ENCODE measurements at regions of chr1 and their contacts with region 1.

Region 1: GRCh38 chr1:55284852-55285251 is 69.7 kb upstream of the USP24 start:
- DNase-seq: peak; percentile 27
- H3K4me3 ChIP-seq: no peak overlapping the region
- H3K27ac ChIP-seq: no peak overlapping the region
- H3K27me3 ChIP-seq: no peaks in the 10 kb centered on the region
- CTCF ChIP-seq: peak; percentile 76

Region 2: DNA sequence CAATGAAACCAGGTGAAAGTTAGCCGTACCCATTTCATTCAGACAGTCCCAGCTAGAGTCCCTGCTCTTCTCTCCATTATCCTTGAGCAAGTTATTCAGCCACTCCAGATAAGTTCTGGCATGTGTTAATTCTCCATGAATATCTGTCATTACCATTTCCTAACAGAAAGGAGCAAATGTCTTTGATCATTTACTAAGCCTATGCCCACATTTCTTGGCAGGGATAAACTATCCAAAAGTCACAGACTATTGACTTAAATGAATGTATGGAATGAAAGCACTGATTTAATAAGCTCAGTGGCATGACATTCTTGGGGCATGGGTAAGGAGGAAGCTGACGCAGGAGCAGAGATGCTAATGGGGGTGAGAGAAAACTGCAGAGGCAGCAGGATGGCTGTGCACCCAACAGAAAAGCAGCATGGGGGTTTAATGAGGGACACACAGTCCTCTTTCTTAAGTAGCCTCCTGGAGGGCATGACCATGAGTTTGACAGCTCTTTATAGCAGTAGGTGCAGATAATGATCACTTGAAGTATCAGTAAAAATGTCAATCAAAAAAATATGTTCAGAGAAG is 380.3 kb before region 1 on chr1:
- CTCF ChIA-PET with region 1: no interaction called
- POLR2A ChIA-PET with region 1: no interaction called
- DNase-seq: peak; percentile 41
- H3K4me3 ChIP-seq: no peak overlapping the region
- H3K27ac ChIP-seq: no peak overlapping the region
- H3K27me3 ChIP-seq: no peaks in the 10 kb centered on the region
- CTCF ChIP-seq: no peak

Region 3: GRCh38 chr1:55089683-55090082 is 195.2 kb before region 1 on chr1:
- CTCF ChIA-PET with region 1: no interaction called
- POLR2A ChIA-PET with region 1: no interaction called
- DNase-seq: no peak
- H3K4me3 ChIP-seq: no peak overlapping the region
- H3K27ac ChIP-seq: no peak overlapping the region
- H3K27me3 ChIP-seq: no peaks in the 10 kb centered on the region
- CTCF ChIP-seq: no peak

Region 4: DNA sequence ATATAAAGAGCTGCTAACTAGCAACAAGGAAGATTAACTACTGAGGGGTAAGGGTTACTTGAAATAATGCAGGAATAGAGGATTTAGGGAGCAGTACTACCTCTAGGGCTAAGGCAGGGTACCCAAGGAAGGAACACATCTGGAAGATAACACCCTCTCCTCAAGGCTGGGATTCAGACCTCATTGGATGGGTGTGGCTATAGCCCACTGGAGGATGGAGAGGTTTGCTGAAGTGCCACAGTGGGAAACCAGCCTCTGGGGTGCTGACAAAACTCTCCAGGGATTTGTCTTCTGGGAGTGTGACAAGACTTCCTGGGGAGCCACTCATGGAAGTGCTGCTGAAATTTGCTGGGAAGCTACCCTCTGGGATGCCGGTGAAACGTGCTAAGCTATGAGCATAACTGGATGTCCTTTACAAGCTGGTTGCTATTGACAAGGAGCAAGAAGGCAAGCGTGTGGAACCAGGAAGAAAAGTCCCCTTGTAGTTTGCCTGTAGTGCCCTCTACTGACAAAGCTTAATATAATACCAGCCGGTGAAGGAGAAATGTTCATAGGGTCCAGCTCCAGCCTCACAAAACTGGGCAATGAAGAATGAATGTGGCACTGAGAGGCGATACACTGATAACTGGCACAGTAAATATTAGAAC is 53.1 kb after region 1 on chr1:
- CTCF ChIA-PET with region 1: interaction called, 31 read pairs
- POLR2A ChIA-PET with region 1: no interaction called
- DNase-seq: no peak
- H3K4me3 ChIP-seq: no peak overlapping the region
- H3K27ac ChIP-seq: no peak overlapping the region
- H3K27me3 ChIP-seq: no peaks in the 10 kb centered on the region
- CTCF ChIP-seq: peak; percentile 67

Region 5: DNA sequence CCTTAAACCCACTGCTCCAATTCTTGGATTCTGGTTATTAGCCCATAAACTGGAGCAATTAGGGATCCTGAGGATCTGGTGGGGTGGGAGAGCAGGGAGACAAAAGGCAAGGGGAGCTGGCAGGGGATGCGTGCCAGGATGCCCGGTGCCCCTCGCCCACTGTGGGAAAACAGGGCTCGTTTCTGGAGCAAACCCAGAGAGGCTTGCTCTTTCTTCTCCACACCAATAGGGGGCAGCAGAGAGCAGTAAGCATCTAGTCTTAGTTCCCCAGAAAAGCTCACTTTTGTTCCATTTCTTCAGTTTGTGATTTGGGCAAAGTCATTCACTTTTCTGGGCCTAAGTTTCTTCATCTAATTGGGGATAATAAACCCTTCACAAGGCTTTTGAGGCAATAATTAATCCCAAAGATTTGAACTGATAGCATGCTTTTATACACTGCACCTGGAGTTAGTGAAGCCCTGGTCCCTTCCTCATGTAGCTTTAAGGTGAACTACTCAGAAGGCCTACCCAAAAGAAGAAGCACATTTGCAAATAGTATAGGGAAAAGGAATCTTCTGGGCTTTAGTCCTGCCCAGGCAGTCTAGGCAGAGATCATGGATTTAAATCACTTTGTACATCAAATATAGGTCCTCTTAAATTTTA is 90.9 kb after region 1 on chr1:
- CTCF ChIA-PET with region 1: interaction called, 27 read pairs
- POLR2A ChIA-PET with region 1: no interaction called
- DNase-seq: peak; percentile 13
- H3K4me3 ChIP-seq: no peak overlapping the region
- H3K27ac ChIP-seq: no peak overlapping the region
- H3K27me3 ChIP-seq: no peaks in the 10 kb centered on the region
- CTCF ChIP-seq: peak; percentile 91

Region 6: DNA sequence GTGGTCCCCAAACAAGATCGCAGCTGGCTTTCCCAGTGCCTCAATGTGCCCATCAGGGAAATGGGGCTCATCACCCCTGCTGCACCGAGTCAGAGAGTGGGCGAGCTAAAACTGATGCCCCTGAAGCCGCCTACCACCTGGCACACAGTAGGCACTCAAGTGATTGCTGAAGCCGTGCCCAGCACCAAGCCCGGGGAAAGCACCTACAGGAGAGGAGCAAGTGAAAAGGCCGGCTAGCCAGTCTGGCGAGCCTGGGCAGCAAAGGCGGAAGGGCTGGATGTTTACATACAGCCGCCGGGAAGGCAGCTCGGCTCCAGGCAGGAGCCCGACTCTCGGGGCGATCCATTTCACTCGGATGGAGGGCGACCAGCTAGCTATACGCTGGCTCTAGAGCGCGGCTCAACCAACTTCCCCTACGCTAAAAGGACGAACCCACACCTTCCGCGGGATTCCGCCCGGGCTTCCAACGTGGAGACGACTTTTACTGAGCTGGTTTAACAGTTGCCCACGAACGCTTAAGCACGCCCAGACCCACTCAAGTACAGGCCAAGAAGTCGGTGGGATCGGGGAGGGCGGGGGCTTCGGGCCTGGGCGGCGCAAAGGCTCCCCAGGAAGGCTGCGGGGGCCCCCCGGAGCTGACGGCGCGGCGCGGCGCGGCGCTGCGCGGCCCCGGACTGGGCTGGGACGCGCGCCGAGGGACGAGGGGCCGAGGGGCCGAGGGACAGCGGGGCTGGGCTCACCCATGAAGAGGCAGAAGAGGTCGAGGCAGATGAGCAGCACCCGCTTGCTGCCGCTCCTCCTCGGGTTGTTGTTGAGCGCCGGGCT is 1293.5 kb after region 1 on chr1:
- CTCF ChIA-PET with region 1: interaction called, 47 read pairs
- POLR2A ChIA-PET with region 1: no interaction called
- DNase-seq: no peak
- H3K4me3 ChIP-seq: peak overlapping the region; percentile 100
- H3K27ac ChIP-seq: peak overlapping the region; percentile 81
- H3K27me3 ChIP-seq: no peaks in the 10 kb centered on the region
- CTCF ChIP-seq: no peak

Region 7: GRCh38 chr1:56584910-56585528 is 1300.2 kb after region 1 on chr1:
- CTCF ChIA-PET with region 1: interaction called, 47 read pairs
- POLR2A ChIA-PET with region 1: no interaction called
- DNase-seq: peak; percentile 49
- H3K4me3 ChIP-seq: no peak overlapping the region
- H3K27ac ChIP-seq: no peak overlapping the region
- H3K27me3 ChIP-seq: no peaks in the 10 kb centered on the region
- CTCF ChIP-seq: peak; percentile 81